Posterior vena cava (tissue), 2 donors: ENCODE measurements at regions of chr21 and their contacts with region 1.

Region 1: DNA sequence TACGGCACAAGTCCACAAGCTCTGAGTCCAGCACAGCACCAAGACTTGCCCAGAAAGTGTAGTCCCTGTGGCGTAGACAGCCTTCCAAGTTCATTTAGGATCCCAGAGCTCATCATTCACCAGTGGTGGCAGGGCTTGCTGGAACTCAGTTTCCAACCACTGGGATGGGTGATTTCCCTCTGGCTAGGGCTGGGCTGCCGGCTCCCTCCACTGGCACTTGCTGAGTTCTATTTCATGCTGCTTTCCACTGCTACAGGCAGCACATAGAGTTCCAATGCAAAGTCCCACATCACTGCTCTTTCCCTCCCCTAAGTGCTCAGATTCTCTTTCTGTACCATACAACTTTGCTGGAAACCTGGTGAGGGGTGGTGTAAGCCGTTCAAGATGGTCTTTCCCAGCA is 510.3 kb upstream of the TMPRSS15 start:
- DNase-seq: no peak

Region 2: GRCh38 chr21:19244502-19245187 is 330.7 kb after region 1 on chr21:
- intact Hi-C with region 1: no loop called
- DNase-seq: peak; percentile 78

Region 3: DNA sequence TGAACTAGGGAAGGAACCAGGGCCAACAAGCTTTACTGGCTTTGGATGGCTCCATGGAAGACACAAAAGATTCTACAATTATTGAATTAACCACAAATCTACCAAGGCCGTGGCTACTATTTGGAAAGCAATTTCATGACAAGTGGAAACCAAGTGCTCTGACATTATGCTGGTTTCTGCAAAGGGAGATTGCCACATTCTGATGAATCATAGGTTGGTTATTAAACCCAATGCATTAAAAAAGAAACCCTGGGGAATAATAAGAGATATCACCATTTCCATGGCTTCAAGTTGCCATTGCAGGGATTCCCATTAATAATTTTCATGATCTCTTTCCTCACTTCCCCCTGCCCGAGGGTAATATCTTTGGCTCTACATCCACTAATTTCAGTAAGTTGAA is 1725.1 kb after region 1 on chr21:
- intact Hi-C with region 1: loop called in 1 of 2 experiments (anchors 10 kb)
- DNase-seq: no peak